ENCODE measurements at regions of chr16 and their contacts with region 1.

Region 1: GRCh38 chr16:11915644-11916523 is at the start of gene GSPT1:
- DNase-seq: peak; percentile 92 to 99
- ATAC-seq: peak; percentile 93 to 95
- H3K4me3 ChIP-seq: peak within 1 kb of the TSS; percentile 93
- H3K27ac ChIP-seq: peak within 1 kb of the TSS; percentile 96 to 99
- H3K4me1 ChIP-seq: peaks cover 33% of the 10 kb centered on the region
- CTCF ChIP-seq: no peak
- EP300 ChIP-seq: peak in 1 of 2 experiments; percentile 15; a peak in 1 of 5 replicates
- POLR2A ChIP-seq: peak; percentile 87
- RAD21 ChIP-seq: no peak
- polyA plus RNA-seq, gene GSPT1: 174 and 215 TPM in 2 replicates

Region 2: DNA sequence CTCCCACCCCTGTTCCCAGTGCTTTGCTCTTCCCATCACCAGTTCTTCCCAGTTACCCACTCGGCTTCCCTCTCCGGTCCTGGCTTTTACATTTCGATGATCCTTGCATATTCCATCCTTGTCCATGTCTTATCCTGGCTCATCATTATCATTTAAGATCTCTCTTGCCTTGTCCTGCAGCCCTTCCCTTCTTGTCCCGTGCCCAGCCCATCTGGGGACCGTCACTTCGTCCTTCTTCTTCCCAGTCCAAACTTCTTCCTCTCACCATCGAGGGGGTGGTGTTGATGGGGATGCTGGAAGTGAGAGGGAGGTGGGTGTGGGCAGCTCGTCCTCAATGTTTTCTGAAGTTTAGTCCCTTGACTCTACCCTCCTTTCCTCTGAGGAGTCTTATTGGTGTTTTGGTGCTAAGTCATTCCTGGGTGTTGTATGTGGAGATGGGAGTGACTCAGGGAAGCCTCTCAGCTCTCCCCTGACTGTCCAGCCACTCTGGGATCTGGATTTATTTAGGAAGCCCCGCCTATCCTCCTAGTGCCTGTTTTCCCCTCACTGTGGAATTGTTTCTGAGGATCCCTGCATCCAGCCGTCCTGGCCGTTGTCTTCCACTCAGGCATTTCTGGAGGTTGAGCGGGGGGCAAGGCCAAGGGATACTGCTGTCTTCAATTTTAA is 61.6 kb after region 1 on chr16:
- CTCF ChIA-PET with region 1: interaction called, 4 read pairs
- POLR2A ChIA-PET with region 1: interaction called, 21 read pairs
- DNase-seq: peak in 1 of 2 experiments; percentile 51
- ATAC-seq: peak; percentile 70 to 73
- H3K4me3 ChIP-seq: peak overlapping the region; percentile 76
- H3K27ac ChIP-seq: peak overlapping the region; percentile 77 to 95; a peak in 5 of 6 replicates
- H3K4me1 ChIP-seq: peaks cover 8% of the 10 kb centered on the region
- CTCF ChIP-seq: no peak
- EP300 ChIP-seq: no peak
- POLR2A ChIP-seq: no peak
- RAD21 ChIP-seq: no peak

Measured in A549 (cell line).